ENCODE measurements at regions of chr2 and their contacts with region 1.

Region 1: DNA sequence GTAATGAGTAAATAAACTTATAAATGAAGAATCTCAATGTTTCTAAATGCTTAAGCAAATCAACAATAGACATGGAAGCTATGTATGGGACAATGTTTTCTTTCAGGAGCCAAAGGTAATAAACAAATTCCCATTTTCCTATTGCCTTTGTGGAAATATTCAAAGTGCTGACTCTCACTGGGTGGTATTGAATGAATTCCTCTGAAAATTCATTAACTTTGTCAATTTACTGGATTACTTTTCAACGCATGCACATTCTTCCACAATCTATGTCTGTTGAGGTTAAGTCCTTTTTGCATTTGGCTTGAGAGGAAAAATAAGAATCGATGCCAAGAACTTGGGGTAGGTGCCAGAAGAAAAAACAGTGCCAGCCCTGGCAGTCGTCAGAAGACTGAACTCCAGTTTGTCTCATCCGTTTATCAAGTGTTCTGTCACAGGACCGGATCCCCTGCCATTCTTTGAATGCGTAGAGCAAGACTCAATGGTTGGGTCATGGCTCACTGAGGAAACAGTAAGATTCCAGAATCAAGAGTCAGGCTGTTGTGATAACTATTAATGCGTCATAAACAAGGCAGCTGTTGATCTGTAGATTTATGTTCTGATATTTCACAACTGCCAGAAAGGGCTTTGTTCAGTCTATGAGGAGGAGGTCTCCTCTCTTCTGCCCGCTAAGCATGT is 133.3 kb downstream of the GFPT1 start:
- DNase-seq: peak; percentile 82
- H3K4me3 ChIP-seq: no peak overlapping the region
- H3K27ac ChIP-seq: peak overlapping the region; percentile 16 to 66 (median 60)
- H3K4me1 ChIP-seq: peaks cover 0 to 34% (median 25%) of the 10 kb centered on the region in 4 donors
- H3K27me3 ChIP-seq: no peaks in the 10 kb centered on the region
- CTCF ChIP-seq: no peak
- EP300 ChIP-seq: no peak
- POLR2A ChIP-seq: no peak

Region 2: DNA sequence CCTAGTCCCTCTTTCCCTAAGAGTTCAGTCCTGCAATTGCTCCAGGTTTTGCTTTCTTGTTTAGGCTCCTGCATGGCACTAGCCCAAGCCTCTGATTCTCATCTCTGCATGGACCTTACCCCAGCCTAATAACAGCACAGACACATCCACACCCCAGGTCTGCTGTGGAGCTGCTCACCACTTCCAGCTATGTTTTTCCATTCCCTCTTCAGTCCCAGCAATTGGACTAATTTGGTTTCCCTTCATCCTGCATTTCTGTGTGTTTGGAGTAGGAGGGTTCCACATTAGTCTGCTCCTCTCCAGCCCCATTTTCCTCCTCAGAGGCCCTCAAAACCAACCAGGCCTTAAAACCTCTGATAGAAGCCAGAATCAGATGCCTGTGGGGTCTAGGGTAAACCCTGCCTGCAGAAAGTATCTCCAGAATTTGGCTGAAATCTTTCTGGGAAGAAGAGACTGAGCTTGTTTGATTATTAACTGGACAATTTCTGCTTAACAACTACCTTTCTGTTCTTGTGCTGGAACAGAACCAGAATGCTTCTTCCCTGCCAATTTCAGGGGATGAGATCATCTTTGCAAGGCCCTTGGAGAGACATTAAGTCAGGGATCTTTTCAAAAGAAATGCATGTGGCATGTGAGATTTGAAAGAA is 37.4 kb after region 1 on chr2:
- intact Hi-C with region 1: loop called (anchors 5 kb)
- DNase-seq: no peak
- H3K4me3 ChIP-seq: no peak overlapping the region
- H3K27ac ChIP-seq: peak overlapping the region in 3 of 4 donors; percentile 22 to 79 (median 62)
- H3K4me1 ChIP-seq: peaks cover 0 to 26% (median 20%) of the 10 kb centered on the region in 4 donors
- H3K27me3 ChIP-seq: no peaks in the 10 kb centered on the region
- CTCF ChIP-seq: no peak
- EP300 ChIP-seq: no peak
- POLR2A ChIP-seq: no peak